Pancreas (tissue), 10 donors: ENCODE measurements at regions of chr1 and their contacts with region 1.

Region 1: GRCh38 chr1:10755970-10756521 is 40.4 kb downstream of the CASZ1 start:
- DNase-seq: no peak
- ATAC-seq: peak; percentile 29 to 64 (median 50)
- H3K4me3 ChIP-seq: no peak overlapping the region
- H3K27ac ChIP-seq: no peak overlapping the region
- H3K4me1 ChIP-seq: peaks cover 0 to under 1% (median 0%) of the 10 kb centered on the region in 3 donors
- H3K27me3 ChIP-seq: no peaks in the 10 kb centered on the region
- CTCF ChIP-seq: no peak

Region 2: DNA sequence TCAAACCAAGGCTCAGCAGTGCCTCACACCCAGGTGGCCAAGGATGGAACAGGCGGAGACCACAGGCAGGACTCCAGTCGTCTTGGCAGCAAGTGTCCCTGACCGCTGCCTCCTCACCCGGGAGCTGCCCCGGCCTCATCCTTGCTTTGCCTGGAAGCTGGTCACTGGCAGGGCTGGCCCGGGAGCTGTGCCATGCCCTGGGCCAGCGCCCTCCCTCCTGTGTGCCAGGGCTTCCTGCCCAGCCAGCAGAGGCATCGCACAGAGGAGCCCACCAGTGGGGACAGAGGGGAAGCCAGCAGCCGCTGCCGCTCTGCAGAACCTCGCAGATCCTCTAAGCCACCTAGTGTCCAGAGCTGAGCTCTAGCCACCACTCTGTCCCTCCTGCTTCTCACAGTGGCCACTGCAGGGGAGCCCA is 32.6 kb after region 1 on chr1:
- intact Hi-C with region 1: loop called in 1 of 3 experiments (anchors 2 kb)
- DNase-seq: peak; percentile 41 to 85 (median 61)
- ATAC-seq: peak; percentile 55 to 82 (median 80)
- H3K4me3 ChIP-seq: no peak overlapping the region
- H3K27ac ChIP-seq: peak overlapping the region in 1 of 4 donors; percentile 10
- H3K4me1 ChIP-seq: peaks cover 6 to 13% (median 7%) of the 10 kb centered on the region in 3 donors
- H3K27me3 ChIP-seq: no peaks in the 10 kb centered on the region
- CTCF ChIP-seq: peak in 2 of 4 donors; percentile 11 to 18